ENCODE measurements at regions of chr6 and their contacts with region 1.

Region 1: GRCh38 chr6:137043710-137044365 is 927 bp downstream of the IL20RA start:
- DNase-seq: peak; percentile 55
- ATAC-seq: peak; percentile 58
- H3K4me3 ChIP-seq: peak overlapping the region; percentile 72
- H3K27ac ChIP-seq: peak overlapping the region; percentile 60
- H3K4me1 ChIP-seq: 0 out of 2 replicates have a peak, but pooled peaks cover 4% of the 10 kb centered on the region
- H3K27me3 ChIP-seq: no peaks in the 10 kb centered on the region
- CTCF ChIP-seq: no peak

Region 2: GRCh38 chr6:137031122-137031710 is 12.6 kb before region 1 on chr6:
- CTCF ChIA-PET with region 1: no interaction called
- POLR2A ChIA-PET with region 1: interaction called, 5 read pairs
- intact Hi-C with region 1: loop called (anchors 2 kb)
- DNase-seq: peak; percentile 19
- ATAC-seq: no peak
- H3K4me3 ChIP-seq: no peak overlapping the region
- H3K27ac ChIP-seq: no peak overlapping the region
- H3K4me1 ChIP-seq: peaks cover 34% of the 10 kb centered on the region
- H3K27me3 ChIP-seq: no peaks in the 10 kb centered on the region
- CTCF ChIP-seq: no peak

Region 3: DNA sequence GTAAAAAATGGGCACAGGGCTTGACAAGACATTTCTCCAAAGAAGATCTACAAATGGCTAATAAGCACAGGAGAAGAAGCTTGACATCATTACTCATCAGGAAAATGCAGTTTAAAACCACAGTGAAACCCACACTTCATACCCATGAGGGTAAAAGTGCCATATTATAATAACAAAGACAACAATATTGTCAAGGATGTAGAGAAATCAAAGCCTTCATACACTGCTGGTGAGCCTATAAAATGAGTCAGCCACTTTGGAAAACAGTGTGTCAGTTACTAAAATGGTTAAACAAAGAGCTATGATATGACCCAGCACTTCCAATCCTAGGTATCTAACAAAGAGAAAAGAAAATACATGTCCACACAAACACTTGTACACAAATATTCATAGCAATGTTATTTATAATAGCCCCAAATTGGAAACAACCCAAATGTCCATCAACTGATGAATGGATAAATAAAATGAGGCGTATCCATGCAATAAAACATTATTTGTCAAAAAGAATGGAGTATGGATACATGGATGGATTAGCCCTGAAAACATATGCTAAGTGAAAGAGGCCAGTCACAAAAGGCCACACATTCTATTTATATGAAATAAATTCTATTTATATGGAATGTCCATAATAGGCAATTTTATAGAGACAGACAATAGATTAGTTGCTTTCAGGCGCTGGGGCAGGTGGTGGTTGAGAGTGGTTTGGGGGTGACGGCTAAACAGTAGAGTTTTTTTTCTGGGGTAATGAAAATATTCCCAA is 12.5 kb after region 1 on chr6:
- CTCF ChIA-PET with region 1: no interaction called
- POLR2A ChIA-PET with region 1: interaction called, 22 read pairs
- intact Hi-C with region 1: no loop called
- DNase-seq: peak; percentile 88
- ATAC-seq: peak; percentile 96
- H3K4me3 ChIP-seq: no peak overlapping the region
- H3K27ac ChIP-seq: peak overlapping the region; percentile 48
- H3K4me1 ChIP-seq: peaks cover 22% of the 10 kb centered on the region
- H3K27me3 ChIP-seq: no peaks in the 10 kb centered on the region
- CTCF ChIP-seq: no peak

Region 4: DNA sequence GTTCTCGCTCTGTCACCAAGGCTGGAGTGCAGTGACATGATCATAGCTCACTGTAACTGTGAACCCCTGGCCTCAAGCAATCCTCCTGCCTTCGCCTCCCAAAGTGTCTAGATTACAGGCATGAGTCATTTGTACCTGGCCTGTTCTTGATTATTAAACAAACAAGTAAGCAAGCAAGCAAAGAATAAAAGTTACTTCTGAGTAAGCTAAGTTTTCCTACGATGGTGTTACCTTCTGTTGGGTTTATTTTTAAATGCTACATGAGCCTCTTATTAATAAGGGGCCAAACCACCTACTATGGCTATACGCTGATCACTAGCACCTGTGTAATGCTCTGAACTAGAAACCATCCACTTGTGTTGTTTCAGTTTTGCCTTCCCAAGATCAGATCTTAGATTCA is 78.8 kb after region 1 on chr6:
- CTCF ChIA-PET with region 1: no interaction called
- POLR2A ChIA-PET with region 1: no interaction called
- intact Hi-C with region 1: no loop called
- DNase-seq: peak; percentile 23
- ATAC-seq: no peak
- H3K4me3 ChIP-seq: no peak overlapping the region
- H3K27ac ChIP-seq: no peak overlapping the region
- H3K4me1 ChIP-seq: no peaks in the 10 kb centered on the region
- H3K27me3 ChIP-seq: no peaks in the 10 kb centered on the region
- CTCF ChIP-seq: no peak